Vagina (tissue), 2 donors: ENCODE measurements at regions of chr1 and their contacts with region 1.

Region 1: DNA sequence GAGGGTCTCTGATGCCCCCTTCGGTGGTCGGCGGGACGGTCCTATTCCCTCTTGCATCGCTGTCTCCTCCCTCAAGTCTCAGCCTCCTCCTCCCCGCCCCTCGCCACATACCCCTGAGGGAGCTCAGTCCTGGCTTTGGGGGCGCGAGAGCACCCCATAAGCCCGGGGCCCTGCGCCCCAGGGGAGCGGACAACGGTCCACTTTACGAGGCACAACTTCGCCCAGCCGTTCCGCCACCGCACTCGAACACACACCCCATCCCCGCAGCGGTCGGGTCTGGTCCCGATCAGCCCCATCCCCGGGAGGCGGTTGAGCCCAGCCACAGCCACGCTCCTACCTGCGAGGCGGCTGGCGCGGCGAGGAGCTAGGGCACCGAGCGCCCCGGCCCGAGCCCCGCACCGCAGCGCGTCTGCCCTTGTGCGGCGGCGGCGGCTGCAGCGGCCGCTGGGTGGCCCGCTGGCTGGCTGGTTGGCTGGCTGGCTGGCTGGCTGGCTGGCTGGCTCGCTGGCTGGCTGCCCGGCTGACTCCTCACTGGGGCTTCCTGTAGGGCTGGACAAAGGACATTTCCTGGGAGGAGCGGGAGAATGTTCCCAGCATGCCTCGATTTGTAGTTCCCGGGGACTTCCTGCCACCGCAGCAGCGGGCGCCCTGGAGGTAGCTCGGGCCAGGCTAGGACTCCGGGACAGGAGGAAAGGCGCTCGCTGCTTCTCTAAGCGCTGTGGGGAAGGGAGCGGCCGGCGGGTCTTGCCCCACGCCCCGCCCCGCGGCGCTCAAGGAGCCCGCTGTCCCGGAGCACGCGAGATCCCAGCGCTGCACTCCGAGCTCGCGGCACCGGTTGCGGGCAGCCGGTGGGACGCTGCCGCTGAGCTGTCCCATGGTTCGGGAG is at the start of gene ZNF697:
- DNase-seq: peak in 1 of 2 donors; percentile 97
- H3K4me3 ChIP-seq: peak within 1 kb of the TSS; percentile 69 to 84
- H3K27ac ChIP-seq: peak within 1 kb of the TSS; percentile 84
- H3K4me1 ChIP-seq: peaks cover 23% of the 10 kb centered on the region
- H3K27me3 ChIP-seq: no peaks in the 10 kb centered on the region
- CTCF ChIP-seq: no peak
- POLR2A ChIP-seq: peak in 1 of 2 donors; percentile 61
- total RNA-seq, gene ZNF697: 3.7 TPM

Region 2: DNA sequence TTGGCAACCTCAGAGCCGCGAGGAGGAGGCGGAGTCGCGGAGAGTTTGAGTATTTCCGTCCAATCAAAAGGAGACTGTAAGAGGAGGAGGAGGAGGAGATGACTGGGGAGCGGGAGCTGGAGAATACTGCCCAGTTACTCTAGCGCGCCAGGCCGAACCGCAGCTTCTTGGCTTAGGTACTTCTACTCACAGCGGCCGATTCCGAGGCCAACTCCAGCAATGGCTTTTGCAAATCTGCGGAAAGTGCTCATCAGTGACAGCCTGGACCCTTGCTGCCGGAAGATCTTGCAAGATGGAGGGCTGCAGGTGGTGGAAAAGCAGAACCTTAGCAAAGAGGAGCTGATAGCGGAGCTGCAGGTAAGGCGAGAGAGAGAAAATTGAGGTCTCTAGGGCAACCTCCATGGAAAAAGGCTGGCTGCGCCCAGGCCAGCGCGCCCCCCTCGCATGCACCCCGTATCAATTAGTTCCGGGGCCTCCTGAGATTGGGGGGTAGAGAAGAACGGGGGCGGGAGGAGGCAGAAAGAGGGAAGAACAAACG is 63.9 kb after region 1 on chr1 and contains the start of gene PHGDH:
- intact Hi-C with region 1: loop called (anchors 2 kb)
- DNase-seq: peak in 1 of 2 donors; percentile 82
- H3K4me3 ChIP-seq: peak within 1 kb of the TSS; percentile 54 to 56
- H3K27ac ChIP-seq: peak within 1 kb of the TSS; percentile 79
- H3K4me1 ChIP-seq: peaks cover 39% of the 10 kb centered on the region
- H3K27me3 ChIP-seq: no peaks in the 10 kb centered on the region
- CTCF ChIP-seq: no peak
- POLR2A ChIP-seq: peak in 1 of 2 donors; percentile 26
- total RNA-seq, gene PHGDH: 92.6 TPM

Region 3: GRCh38 chr1:119784191-119784782 is 136.3 kb after region 1 on chr1:
- intact Hi-C with region 1: no loop called
- DNase-seq: no peak
- H3K4me3 ChIP-seq: no peak overlapping the region
- H3K27ac ChIP-seq: no peak overlapping the region
- H3K4me1 ChIP-seq: peaks cover 29% of the 10 kb centered on the region
- H3K27me3 ChIP-seq: no peaks in the 10 kb centered on the region
- CTCF ChIP-seq: no peak
- POLR2A ChIP-seq: no peak